Activated CD4-positive, alpha-beta T cell treated with anti-CD3 and anti-CD28 coated beads for 36 hours (primary cell): ENCODE measurements at regions of chr16 and their contacts with region 1.

Region 1: GRCh38 chr16:81006814-81007696 is at the starts of genes CENPN and CMC2:
- DNase-seq: peak; percentile 98
- ATAC-seq: peak; percentile 86
- H3K4me3 Mint-ChIP-seq: peak within 1 kb of the TSS; percentile 98
- H3K27ac Mint-ChIP-seq: peak within 1 kb of the TSS; percentile 100
- H3K4me1 Mint-ChIP-seq: peaks cover 48% of the 10 kb centered on the region
- H3K27me3 Mint-ChIP-seq: no peaks in the 10 kb centered on the region
- total RNA-seq, gene CENPN: 45.7 to 56.3 TPM
- total RNA-seq, gene CMC2: 100.0 to 114 TPM

Region 2: DNA sequence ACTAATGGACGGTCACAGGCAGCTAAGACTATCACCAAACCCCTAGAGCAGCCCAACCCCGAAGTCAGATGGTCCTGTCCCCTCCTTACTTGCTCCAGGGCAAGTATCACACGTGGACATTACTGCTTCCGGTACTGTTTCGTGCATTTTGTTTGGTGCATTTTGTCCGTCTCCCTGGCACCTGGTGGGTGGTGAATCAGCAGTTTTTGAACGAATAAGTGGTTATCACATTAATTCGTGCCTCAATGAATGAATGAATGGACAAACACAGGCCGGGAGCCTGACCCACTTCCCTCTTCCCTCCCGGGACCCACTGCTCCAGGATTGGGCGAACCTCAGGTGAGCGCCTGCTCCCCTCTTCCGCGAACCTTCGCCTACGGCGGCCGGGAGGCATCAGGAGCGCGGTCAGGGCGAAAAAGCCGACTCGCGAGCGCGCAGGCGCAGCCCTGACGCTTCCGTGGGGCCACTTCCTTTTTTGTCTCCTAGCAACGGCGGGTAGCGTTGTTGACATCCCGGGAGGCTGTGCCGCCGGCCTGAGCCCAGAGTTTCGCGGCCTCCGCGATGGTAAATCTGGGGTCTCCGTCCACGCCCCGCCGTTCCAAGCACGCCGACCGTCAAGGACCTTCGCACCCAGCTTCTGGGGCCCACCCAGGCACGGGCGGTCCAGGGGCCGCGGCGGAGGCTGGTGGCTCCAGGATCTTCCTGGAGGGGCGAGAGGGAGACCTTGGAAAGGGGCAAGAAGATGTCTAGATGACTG is 466.4 kb before region 1 on chr16 and contains the start of gene DYNLRB2:
- CTCF ChIA-PET with region 1: no interaction called
- POLR2A ChIA-PET with region 1: no interaction called
- intact Hi-C with region 1: loop called in 1 of 2 experiments (anchors 5 kb)
- DNase-seq: peak; percentile 95
- ATAC-seq: peak; percentile 91
- H3K4me3 Mint-ChIP-seq: peak within 1 kb of the TSS; percentile 97
- H3K27ac Mint-ChIP-seq: peak within 1 kb of the TSS; percentile 99
- H3K4me1 Mint-ChIP-seq: peaks cover 28% of the 10 kb centered on the region
- H3K27me3 Mint-ChIP-seq: peaks cover 4% of the 10 kb centered on the region
- total RNA-seq, gene DYNLRB2: not detected

Region 3: GRCh38 chr16:80924372-80924978 is 82.6 kb before region 1 on chr16:
- CTCF ChIA-PET with region 1: no interaction called
- POLR2A ChIA-PET with region 1: no interaction called
- intact Hi-C with region 1: loop called in 1 of 2 experiments (anchors 1 kb)
- DNase-seq: peak; percentile 76
- ATAC-seq: peak; percentile 71
- H3K4me3 Mint-ChIP-seq: no peak overlapping the region
- H3K27ac Mint-ChIP-seq: no peak overlapping the region
- H3K4me1 Mint-ChIP-seq: no peaks in the 10 kb centered on the region
- H3K27me3 Mint-ChIP-seq: peaks cover 17% of the 10 kb centered on the region

Region 4: GRCh38 chr16:81035398-81035974 is 28.4 kb after region 1 on chr16 and contains the start of gene ATMIN:
- CTCF ChIA-PET with region 1: interaction called, 27 read pairs
- POLR2A ChIA-PET with region 1: interaction called, 9 read pairs
- intact Hi-C with region 1: loop called (anchors 1 kb)
- DNase-seq: peak; percentile 93
- ATAC-seq: peak; percentile 91
- H3K4me3 Mint-ChIP-seq: peak within 1 kb of the TSS; percentile 80
- H3K27ac Mint-ChIP-seq: peak within 1 kb of the TSS; percentile 48
- H3K4me1 Mint-ChIP-seq: peaks cover 30% of the 10 kb centered on the region
- H3K27me3 Mint-ChIP-seq: no peaks in the 10 kb centered on the region
- total RNA-seq, gene ATMIN: 20.3 to 31.2 TPM

Region 5: DNA sequence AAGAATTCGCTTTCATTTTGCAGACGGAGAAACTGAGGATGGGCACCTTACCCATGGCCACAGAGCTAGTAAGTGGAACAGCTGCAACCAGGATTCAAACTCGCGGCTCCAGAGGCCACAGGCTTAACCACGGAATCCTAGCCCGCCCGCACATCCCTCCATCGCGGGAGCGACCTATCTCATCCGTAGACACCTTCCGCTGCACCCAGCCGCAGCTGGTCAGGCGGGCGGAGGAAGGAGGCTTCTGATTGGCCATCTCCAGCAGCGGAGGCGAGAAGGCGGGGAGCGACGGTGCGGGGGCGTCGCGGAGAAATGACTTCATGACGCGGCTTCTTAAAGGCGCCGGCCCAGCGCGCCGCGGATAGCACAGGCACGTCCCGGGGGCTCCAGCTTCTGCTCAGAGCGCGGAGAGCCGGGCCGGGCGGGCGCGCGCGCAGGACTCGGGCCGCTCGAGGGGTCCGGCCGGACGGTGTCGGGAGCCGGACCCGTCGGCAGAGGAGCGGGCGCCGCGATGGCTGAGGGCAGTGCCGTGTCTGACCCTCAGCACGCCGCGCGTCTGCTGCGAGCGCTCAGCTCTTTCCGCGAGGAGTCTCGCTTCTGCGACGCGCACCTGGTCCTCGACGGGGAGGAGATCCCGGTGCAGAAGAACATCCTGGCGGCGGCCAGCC is 307.7 kb after region 1 on chr16 and contains the start of gene GAN:
- CTCF ChIA-PET with region 1: no interaction called
- POLR2A ChIA-PET with region 1: no interaction called
- intact Hi-C with region 1: loop called (anchors 2 to 10 kb)
- DNase-seq: peak; percentile 97
- ATAC-seq: peak; percentile 91
- H3K4me3 Mint-ChIP-seq: peak within 1 kb of the TSS; percentile 99
- H3K27ac Mint-ChIP-seq: peak within 1 kb of the TSS; percentile 97
- H3K4me1 Mint-ChIP-seq: peaks cover 66% of the 10 kb centered on the region
- H3K27me3 Mint-ChIP-seq: no peaks in the 10 kb centered on the region
- total RNA-seq, gene GAN: 13.4 to 13.8 TPM

Region 6: DNA sequence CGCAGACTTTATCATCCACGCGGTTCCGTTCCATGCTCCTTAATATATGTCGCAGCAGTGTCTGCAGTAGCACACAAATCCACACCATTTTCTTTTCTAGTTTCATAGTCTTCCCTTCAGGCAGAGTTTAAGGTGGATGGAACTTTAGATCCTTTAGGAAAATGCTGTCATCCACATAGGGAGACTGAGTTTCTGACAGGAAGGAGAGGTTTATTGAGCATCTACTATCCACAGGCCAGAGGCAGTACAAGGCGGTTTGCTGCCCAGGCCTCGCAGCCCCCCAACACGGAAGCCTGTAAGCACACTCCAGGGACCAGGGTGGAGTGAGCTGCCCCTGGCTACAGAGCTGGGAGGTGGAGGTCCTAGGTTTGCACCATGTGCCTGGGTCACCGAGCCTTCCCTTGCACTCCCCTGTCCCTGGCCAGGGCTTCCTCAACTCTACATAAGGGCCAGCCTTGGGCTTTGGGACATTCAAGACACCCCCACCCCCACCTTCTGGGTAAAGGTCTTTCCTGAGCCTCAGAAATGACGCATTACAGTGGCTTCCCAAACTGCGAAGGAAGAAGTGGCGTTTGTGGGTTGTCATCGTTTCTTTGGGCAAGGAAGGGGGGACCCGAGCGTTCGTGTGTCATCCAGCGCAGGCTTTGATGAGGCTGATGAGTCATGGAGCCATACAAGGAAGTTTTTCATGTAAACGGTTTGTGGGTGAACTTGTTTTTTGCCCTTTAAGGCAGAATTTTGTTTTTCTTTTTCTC is 625.5 kb after region 1 on chr16:
- CTCF ChIA-PET with region 1: no interaction called
- POLR2A ChIA-PET with region 1: no interaction called
- intact Hi-C with region 1: loop called in 1 of 2 experiments (anchors 10 kb)
- DNase-seq: peak; percentile 90
- ATAC-seq: peak; percentile 81
- H3K4me3 Mint-ChIP-seq: peak overlapping the region; percentile 47
- H3K27ac Mint-ChIP-seq: peak overlapping the region; percentile 97
- H3K4me1 Mint-ChIP-seq: peaks cover 67% of the 10 kb centered on the region
- H3K27me3 Mint-ChIP-seq: no peaks in the 10 kb centered on the region

Region 7: DNA sequence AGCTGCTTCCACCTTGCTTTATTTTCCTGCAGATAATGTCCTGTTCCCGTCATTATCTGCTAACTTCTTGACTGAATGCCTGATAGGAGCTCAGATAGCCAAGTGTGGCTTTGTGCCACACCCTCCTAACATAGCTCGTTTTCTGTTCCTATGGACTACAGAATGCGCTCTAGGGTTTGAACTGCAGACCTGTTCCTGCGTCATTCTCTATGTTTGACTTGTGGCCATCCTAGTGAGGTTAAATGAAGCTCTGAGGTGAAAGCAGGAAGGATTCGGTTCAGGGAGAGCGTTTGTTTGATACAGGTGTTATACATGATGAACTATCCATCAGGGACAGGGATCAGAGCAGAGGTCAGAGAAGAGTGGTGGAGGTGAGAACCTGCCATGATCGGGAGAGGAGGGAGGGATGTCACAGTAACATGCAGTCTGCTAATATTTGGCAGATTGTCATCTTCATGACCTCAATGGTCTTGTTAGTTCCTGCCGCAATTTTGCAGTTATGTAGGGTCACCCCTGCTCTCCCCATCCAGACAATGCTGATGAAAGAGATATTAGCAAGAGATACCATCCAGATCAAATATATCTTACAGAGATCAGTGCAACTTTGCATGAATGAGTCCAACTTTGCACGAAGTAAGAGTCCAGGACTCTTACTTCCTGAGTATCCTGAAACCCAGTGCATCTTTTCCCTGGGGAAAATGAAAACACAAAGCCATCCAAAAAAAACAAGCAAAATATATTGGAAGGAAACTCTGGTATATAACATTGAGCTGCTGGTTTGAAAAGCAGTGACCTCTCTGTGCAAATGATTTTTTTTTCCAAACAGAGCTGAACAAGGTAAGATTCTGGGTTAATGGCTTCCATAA is 1130.1 kb after region 1 on chr16:
- CTCF ChIA-PET with region 1: no interaction called
- POLR2A ChIA-PET with region 1: no interaction called
- intact Hi-C with region 1: no loop called
- DNase-seq: no peak
- ATAC-seq: no peak
- H3K4me3 Mint-ChIP-seq: no peak overlapping the region
- H3K27ac Mint-ChIP-seq: no peak overlapping the region
- H3K4me1 Mint-ChIP-seq: peaks cover 18% of the 10 kb centered on the region
- H3K27me3 Mint-ChIP-seq: no peaks in the 10 kb centered on the region